Left cardiac atrium (tissue), 4 donors: ENCODE measurements at regions of chr4 and their contacts with region 1.

Region 1: DNA sequence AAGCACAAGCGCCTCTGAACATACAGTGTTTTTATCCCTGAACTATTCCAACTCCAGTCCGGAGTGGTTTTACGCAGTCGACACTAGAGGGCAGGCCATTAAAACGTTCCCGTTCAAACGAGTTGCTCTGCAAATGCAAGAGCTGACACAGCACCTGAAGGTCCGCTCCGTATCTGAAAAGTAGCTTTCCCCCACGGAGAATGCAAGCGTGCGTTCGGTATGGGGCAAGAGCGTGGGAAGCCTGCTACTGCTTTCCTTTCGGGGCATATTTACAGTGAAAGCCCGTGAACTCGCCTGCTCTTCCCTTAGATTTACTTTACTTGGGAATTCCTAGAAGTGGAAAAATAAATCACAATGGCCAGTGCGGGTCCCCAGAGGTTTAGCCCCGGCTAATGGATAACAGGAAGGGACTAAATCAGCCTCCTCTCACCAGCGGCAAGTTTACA is 190.8 kb downstream of the TSPAN5 start:
- DNase-seq: peak; percentile 73
- ATAC-seq: peak; percentile 90 to 95

Region 2: DNA sequence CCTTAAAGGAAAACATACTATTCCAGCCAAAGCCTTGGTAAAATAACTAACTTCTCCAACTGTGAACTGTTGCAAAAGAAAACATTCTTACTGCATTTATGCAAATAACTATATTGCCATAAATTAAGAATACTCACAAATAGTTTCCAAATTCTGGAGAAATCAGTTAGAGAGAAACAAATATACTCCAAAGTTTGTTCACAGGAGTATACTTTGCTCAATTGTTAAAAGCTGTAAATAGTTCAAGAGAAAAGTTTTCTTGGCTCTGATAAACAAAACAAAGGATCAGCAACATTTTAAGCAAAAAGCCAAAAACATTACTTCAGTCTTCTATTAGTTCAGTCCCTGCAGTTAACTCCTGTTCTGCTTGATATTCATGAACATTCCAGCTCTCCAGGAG is 378.3 kb after region 1 on chr4:
- intact Hi-C with region 1: loop called in 1 of 2 experiments (anchors 10 kb)
- DNase-seq: no peak
- ATAC-seq: no peak

Region 3: DNA sequence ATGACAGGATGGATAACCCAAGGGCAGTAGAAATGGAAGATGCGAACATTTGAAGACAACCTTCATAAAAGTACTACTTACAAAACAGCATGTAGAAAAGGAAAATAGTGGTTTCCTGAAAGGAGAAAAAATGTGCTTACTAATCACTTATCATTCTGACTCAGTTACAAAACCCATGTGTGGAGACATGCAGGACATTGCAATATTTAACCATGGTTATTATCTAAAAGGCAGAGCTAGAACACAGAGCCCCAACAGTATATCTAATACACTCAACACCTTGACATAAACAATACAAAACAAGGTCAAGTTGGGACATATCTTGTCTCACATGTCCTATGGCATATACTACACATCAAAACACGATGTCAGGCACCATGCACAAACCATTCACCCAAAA is 405.4 kb after region 1 on chr4:
- intact Hi-C with region 1: no loop called
- DNase-seq: no peak
- ATAC-seq: no peak